ENCODE measurements at regions of chr12 and their contacts with region 1.

Region 1: GRCh38 chr12:120292661-120293531 is at the start of gene RNU4-1:
- DNase-seq: peak; percentile 95
- H3K4me3 ChIP-seq: peak within 1 kb of the TSS; percentile 62
- H3K27ac ChIP-seq: peak within 1 kb of the TSS; percentile 100
- H3K27me3 ChIP-seq: no peaks in the 10 kb centered on the region
- CTCF ChIP-seq: no peak
- polyA plus RNA-seq, gene RNU4-1: under 0.01 TPM in 1 of 2 replicates, not detected in the other

Region 2: DNA sequence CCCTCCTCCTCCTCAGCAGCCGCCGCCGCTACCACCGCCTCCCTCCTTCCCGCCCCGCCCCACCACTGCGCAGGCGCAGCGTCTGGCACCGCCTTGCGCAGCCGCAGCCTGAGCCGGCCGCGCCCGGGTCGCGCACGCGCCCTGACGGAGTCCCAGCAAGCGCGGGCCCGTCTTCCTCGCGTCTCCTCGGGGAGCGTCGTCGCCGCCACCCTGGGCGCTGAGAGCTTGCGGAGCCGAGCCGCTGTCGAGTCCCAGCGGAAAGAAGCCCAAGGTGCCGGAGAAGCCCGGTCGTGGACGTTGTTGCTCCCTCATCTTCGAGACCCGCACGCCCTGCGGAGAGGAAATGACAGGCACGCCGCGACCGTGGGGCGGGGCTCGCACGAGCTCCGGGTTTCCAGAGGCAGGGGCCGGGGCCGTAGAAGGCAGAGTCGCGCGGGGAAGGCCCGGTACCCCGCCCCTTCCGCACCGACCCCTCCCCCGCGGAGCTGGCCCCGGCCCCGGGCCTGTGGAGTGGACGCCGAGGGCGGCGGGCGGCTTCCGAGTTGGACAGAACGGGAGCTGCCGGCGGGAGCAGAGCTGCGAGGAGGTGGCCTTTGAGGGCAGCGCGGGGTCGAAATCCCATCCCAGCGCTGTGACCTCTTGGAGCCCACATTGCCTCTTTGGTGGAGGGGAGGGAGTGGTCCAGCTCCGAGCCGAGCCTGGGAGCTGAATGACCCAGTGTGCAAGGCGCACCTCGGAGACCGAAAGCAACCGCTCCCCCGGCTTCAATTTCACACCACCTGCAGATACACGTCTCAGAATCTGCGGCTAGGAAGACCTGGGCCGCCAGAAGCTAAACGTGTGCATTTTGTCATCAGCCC is 175.9 kb before region 1 on chr12:
- CTCF ChIA-PET with region 1: no interaction called
- POLR2A ChIA-PET with region 1: interaction called, 14 read pairs
- DNase-seq: peak; percentile 74
- H3K4me3 ChIP-seq: peak overlapping the region; percentile 97
- H3K27ac ChIP-seq: peak overlapping the region; percentile 93
- H3K27me3 ChIP-seq: no peaks in the 10 kb centered on the region
- CTCF ChIP-seq: no peak

Region 3: GRCh38 chr12:120257041-120257821 is 35.7 kb before region 1 on chr12:
- CTCF ChIA-PET with region 1: no interaction called
- POLR2A ChIA-PET with region 1: interaction called, 71 read pairs
- DNase-seq: peak; percentile 84
- H3K4me3 ChIP-seq: peak overlapping the region; percentile 35
- H3K27ac ChIP-seq: peak overlapping the region; percentile 82
- H3K27me3 ChIP-seq: no peaks in the 10 kb centered on the region
- CTCF ChIP-seq: peak; percentile 4; the same call in 1 of the 2 replicates

Region 4: DNA sequence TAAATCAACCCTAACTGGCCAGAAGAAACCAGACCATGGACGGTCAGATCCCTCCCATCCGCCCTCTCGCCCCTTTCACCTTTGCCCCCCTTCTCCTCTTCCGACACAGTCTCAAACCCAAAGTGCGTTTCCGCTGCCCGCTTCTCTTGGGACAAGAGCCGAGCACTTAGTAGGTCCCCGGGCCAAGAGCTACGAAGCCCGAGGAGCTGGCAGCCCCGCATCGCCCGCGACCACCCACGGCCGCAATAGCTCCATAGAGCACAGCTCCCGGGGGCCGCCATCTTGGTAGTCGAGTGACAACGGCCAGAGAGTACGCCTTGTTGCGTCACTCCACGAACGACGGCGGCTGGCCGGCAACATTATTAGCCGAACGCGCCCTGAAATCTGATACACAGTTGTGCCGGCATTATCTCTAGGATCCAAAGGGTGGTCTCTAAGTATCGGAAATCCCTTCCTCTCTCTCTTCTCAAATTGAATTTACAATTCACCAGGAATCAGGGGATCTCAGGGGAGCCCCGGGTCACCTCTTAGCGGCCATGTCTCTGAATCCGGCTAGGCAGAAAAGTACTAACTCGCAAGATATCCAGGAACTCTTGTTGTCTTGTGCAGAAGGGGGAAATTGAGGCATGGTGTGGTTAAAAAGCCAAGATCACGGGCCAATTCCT is 236.1 kb after region 1 on chr12 and contains the start of gene COQ5:
- CTCF ChIA-PET with region 1: no interaction called
- POLR2A ChIA-PET with region 1: interaction called, 14 read pairs
- DNase-seq: peak; percentile 52
- H3K4me3 ChIP-seq: peak within 1 kb of the TSS; percentile 92
- H3K27ac ChIP-seq: peak within 1 kb of the TSS; percentile 77
- H3K27me3 ChIP-seq: no peaks in the 10 kb centered on the region
- CTCF ChIP-seq: no peak
- polyA plus RNA-seq, gene COQ5: 36.2 and 47.1 TPM in 2 replicates

Measured in AG04450 (cell line).